ENCODE measurements at regions of chr2 and their contacts with region 1.

Region 1: GRCh38 chr2:119641562-119642258 is 37.3 kb upstream of the TMEM177 start:
- DNase-seq: peak; percentile 13
- H3K4me3 ChIP-seq: no peak overlapping the region
- H3K27me3 ChIP-seq: peaks cover 15% of the 10 kb centered on the region
- CTCF ChIP-seq: peak; percentile 95

Region 2: GRCh38 chr2:119630121-119630520 is 11.6 kb before region 1 on chr2:
- CTCF ChIA-PET with region 1: interaction called, 20 read pairs
- POLR2A ChIA-PET with region 1: no interaction called
- DNase-seq: no peak
- H3K4me3 ChIP-seq: no peak overlapping the region
- H3K27me3 ChIP-seq: peaks cover 1% of the 10 kb centered on the region; the same call in 1 of the 2 replicates
- CTCF ChIP-seq: no peak

Region 3: DNA sequence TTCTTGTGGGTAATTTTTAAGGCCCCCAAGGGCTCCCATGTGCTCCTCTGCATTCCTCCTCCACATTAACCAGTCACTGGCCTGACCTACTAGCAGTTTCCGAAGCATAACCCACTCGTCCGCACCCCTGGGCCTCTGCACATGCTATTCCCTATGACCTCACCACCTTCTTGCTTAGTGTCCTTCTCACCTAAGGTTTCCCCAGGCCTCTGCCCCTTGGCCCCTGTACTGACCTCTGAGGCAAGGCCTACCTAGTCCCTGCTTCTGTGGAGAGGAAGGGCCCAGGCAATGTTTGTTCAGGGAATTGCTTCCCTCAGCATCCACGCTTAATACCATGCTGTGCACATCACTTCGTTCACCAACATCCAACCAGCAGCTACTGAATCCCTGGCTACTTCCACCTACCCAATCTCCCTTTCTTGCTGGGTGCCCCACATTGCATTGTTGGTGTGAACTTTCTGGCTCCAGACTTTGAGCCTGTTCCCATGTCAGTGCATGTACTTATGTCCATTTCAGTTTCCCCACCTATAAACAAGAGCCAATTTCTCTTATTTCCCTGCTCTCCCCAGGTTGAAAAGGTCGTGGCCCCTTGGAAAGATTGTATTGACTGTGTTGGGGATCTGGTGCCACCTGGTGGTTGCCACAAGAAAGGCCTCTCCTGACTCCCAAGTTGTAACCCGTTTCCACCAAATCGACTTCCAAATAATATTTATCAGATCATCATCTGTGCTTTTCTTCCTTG is 18.1 kb after region 1 on chr2:
- CTCF ChIA-PET with region 1: interaction called, 38 read pairs
- POLR2A ChIA-PET with region 1: no interaction called
- DNase-seq: no peak
- H3K4me3 ChIP-seq: no peak overlapping the region
- H3K27me3 ChIP-seq: peaks cover 1% of the 10 kb centered on the region; the same call in 1 of the 2 replicates
- CTCF ChIP-seq: peak; percentile 88

Measured in BJ (cell line).